Naive thymus-derived CD4-positive, alpha-beta T cell (primary cell): ENCODE measurements at regions of chr11 and their contacts with region 1.

Region 1: GRCh38 chr11:66842896-66843775 is at the start of gene RCE1:
- DNase-seq: peak; percentile 86 to 96 (median 91)
- ATAC-seq: peak; percentile 96
- H3K4me3 ChIP-seq: peak within 1 kb of the TSS; percentile 94
- H3K4me3 Mint-ChIP-seq: peak within 1 kb of the TSS; percentile 87 to 97 (median 93)
- H3K27ac ChIP-seq: peak within 1 kb of the TSS; percentile 96
- H3K27ac Mint-ChIP-seq: peak within 1 kb of the TSS; percentile 74 to 97 (median 92)
- H3K4me1 ChIP-seq: peaks cover 31 to 47% of the 10 kb centered on the region in 2 donors
- H3K4me1 Mint-ChIP-seq: peaks cover 31 to 58% (median 47%) of the 10 kb centered on the region in 7 donors
- H3K27me3 ChIP-seq: no peaks in the 10 kb centered on the region
- H3K27me3 Mint-ChIP-seq: no peaks in the 10 kb centered on the region
- total RNA-seq, gene RCE1: 24.6 to 47.1 (median 33.6) TPM

Region 2: DNA sequence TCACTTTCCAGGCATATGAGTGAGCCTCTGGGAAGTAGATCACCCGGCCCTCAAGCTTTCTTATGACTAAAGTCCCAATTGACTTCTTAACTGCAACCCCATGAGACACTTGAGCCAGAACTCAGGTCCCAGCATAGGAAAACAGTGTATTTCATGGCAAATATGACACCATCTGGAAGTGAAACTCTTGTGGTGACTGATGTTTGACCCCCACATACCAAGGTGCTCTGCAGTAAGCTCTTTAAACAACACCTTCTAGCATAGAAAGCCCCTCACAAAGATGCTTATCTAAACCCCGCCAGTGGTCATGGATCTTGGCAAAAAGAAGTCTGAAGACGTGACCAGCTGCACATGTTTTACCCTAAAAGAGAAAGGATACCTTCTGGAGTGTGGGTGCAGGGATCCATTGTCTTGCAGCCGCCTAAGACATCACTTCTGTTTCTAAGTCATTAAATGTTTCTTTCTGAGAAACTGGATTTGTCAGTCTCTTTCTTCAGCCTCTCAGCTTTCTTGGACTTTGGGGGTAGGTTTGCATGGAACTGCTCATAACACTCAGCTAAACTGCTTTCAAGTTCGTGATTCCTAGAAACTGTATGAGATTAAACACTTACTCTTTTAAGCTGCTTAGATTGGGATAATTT is 383.9 kb before region 1 on chr11:
- CTCF ChIA-PET with region 1: no interaction called
- POLR2A ChIA-PET with region 1: no interaction called
- intact Hi-C with region 1: no loop called
- DNase-seq: no peak
- ATAC-seq: no peak
- H3K4me3 ChIP-seq: no peak overlapping the region
- H3K4me3 Mint-ChIP-seq: no peak overlapping the region
- H3K27ac ChIP-seq: no peak overlapping the region
- H3K27ac Mint-ChIP-seq: no peak overlapping the region
- H3K4me1 ChIP-seq: peaks cover 0 to 5% of the 10 kb centered on the region in 2 donors
- H3K4me1 Mint-ChIP-seq: peaks cover 6 to 34% (median 12%) of the 10 kb centered on the region in 7 donors
- H3K27me3 ChIP-seq: no peaks in the 10 kb centered on the region
- H3K27me3 Mint-ChIP-seq: no peaks in the 10 kb centered on the region

Region 3: DNA sequence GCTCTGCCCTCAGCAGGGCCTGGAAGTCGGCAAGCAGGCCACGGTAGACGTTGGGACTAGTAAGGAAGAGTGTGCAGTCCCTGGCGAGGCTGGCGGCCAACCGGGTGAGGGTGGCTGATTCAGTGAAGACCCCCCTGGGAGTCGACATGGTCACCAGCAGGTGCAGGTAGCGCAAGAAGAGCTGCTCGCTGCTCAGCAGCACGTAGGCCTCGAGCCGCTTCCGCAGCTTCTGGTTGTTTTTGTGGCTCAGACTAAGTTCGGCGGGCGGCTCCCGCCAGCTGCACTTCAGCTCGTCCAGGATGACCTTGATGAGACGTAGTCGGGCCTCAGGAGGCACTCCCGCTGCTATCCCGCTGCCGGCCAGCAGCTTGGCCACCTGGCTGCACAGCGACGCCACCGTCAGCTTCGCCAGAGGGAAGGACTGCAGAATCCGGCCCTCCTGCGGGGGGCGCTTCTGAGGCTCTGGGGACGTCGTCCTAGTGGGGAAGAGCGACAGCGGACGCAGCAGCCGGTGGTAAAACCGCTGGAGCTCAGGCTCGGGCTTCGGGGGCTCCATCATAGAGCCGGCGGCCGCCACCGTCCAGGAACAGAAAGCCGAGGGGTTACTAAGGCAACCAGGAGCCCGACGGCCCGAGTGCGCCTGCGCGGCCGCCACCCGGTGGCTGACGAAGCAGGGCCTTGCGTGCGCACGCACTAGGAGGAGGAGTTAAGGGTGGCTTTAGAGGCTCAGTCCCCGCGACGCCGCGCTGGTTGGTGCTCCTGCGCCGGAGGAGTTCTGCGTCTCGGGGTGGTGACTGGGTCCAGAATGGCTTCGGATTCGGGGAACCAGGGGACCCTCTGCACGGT is 250.5 kb before region 1 on chr11 and contains the starts of genes CCDC87 and CCS:
- CTCF ChIA-PET with region 1: no interaction called
- POLR2A ChIA-PET with region 1: interaction called, 3 read pairs
- intact Hi-C with region 1: loop called in 1 of 2 experiments (anchors 2 kb)
- DNase-seq: peak; percentile 94 to 98 (median 96)
- ATAC-seq: peak; percentile 98
- H3K4me3 ChIP-seq: peak within 1 kb of the TSS; percentile 98
- H3K4me3 Mint-ChIP-seq: peak within 1 kb of the TSS; percentile 89 to 100 (median 98)
- H3K27ac ChIP-seq: peak within 1 kb of the TSS; percentile 94
- H3K27ac Mint-ChIP-seq: peak within 1 kb of the TSS; percentile 90 to 100 (median 97)
- H3K4me1 ChIP-seq: peaks cover 9 to 30% of the 10 kb centered on the region in 2 donors
- H3K4me1 Mint-ChIP-seq: peaks cover 13 to 40% (median 28%) of the 10 kb centered on the region in 7 donors
- H3K27me3 ChIP-seq: no peaks in the 10 kb centered on the region
- H3K27me3 Mint-ChIP-seq: no peaks in the 10 kb centered on the region
- total RNA-seq, gene CCDC87: 0.11 to 1.2 (median 0.60) TPM in 4 of 5 experiments, not detected in the other
- total RNA-seq, gene CCS: 32.8 to 63.5 (median 42.5) TPM

Region 4: DNA sequence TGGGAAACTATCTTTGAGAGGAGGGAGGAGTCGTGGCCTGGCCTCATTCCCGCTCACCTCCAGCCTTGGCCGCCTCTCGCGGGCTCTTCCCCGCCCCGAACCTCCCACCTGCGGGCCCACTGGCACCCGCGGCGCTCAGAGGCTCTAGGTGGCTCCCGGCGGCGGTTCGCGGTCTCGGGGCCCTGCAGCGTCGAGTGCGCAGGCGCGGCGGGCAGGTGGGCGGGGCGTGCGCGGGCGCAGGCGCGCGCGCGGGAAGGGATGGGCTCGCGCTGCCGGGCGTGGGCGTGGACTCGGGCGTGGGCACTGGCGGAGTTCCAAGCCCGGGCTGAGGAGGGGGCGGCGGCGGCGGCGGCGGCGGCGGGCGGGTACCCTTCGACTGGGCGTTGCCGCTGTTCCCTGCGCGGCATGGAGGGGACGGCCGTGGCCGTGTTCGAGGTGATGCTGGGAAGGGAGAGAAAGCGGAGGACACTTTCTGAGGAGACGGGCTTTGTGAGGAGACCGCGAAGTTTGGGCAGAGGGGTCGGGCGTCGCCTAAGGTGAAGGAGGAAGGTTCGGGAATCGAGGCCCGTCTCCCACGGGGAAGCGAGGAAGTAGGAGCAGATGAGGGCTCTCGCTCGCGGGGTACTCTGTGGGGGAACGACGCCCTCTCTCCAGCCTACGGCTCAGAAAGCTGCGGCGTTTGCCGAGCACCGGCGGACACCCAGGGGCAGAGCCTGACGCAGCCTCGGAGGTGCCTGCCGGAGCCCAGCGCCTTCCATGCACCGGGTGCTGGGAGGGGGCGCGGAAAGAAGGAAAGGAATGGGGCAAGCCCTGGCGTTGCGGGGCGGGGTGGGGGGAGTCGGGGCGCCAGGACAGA is 98.4 kb before region 1 on chr11:
- CTCF ChIA-PET with region 1: interaction called, 3 read pairs
- POLR2A ChIA-PET with region 1: interaction called, 4 read pairs
- intact Hi-C with region 1: loop called in 1 of 2 experiments (anchors 1 kb)
- DNase-seq: peak; percentile 83 to 98 (median 91)
- ATAC-seq: peak; percentile 97
- H3K4me3 ChIP-seq: peak overlapping the region; percentile 83
- H3K4me3 Mint-ChIP-seq: peak overlapping the region; percentile 82 to 97 (median 94)
- H3K27ac ChIP-seq: peak overlapping the region; percentile 89
- H3K27ac Mint-ChIP-seq: peak overlapping the region; percentile 18 to 89 (median 81)
- H3K4me1 ChIP-seq: peaks cover 0 to 3% of the 10 kb centered on the region in 2 donors
- H3K4me1 Mint-ChIP-seq: peaks cover 0 to 16% (median 4%) of the 10 kb centered on the region in 7 donors
- H3K27me3 ChIP-seq: no peaks in the 10 kb centered on the region
- H3K27me3 Mint-ChIP-seq: peaks cover 0 to 10% (median 0%) of the 10 kb centered on the region in 5 donors

Region 5: DNA sequence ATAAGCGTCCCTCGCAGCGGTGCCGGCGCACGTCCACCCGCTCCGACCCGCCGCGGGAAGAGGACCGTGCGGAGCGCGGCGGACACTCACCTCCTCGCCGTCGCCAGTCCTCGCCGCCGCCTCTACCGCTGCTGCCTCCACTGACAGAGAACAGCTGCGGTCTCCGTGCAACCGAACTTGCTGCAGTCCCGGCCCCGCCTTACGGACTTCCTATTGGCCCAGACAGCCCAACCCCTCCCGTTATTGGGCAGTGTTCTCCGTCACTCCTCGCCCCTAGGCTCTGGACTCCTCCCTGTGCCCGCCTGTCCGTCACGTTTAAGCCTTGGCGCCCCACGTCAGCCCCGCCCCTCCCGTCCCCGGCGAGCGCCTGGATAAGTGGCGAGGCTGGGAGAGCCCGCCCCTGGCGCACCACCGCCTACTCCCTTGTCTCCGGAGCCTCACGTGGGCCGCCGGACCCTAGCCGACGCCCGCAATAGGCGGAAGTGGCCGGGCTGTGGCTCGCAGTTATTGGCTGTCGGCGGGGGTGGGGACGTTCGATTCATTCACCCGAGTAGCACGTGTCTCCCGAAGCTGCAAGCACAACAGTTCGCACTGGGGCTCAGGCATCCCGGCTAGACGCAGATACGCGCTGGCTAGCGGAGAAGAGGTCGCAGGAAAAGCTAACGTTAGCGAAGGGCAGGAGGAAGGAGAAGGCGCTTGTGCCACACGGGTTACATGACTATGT is 115.3 kb after region 1 on chr11 and contains the start of gene PC:
- CTCF ChIA-PET with region 1: no interaction called
- POLR2A ChIA-PET with region 1: no interaction called
- intact Hi-C with region 1: loop called (anchors 1 kb)
- DNase-seq: peak; percentile 83 to 98 (median 96)
- ATAC-seq: peak; percentile 98
- H3K4me3 ChIP-seq: peak within 1 kb of the TSS; percentile 81
- H3K4me3 Mint-ChIP-seq: peak within 1 kb of the TSS; percentile 82 to 95 (median 91)
- H3K27ac ChIP-seq: peak within 1 kb of the TSS; percentile 64
- H3K27ac Mint-ChIP-seq: peak within 1 kb of the TSS; percentile 76 to 93 (median 87)
- H3K4me1 ChIP-seq: peaks cover 8 to 19% of the 10 kb centered on the region in 2 donors
- H3K4me1 Mint-ChIP-seq: peaks cover 16 to 31% (median 27%) of the 10 kb centered on the region in 7 donors
- H3K27me3 ChIP-seq: no peaks in the 10 kb centered on the region
- H3K27me3 Mint-ChIP-seq: peaks cover 0 to 6% (median 0%) of the 10 kb centered on the region in 5 donors
- total RNA-seq, gene PC: 8.4 to 11.2 (median 10.0) TPM

Region 6: DNA sequence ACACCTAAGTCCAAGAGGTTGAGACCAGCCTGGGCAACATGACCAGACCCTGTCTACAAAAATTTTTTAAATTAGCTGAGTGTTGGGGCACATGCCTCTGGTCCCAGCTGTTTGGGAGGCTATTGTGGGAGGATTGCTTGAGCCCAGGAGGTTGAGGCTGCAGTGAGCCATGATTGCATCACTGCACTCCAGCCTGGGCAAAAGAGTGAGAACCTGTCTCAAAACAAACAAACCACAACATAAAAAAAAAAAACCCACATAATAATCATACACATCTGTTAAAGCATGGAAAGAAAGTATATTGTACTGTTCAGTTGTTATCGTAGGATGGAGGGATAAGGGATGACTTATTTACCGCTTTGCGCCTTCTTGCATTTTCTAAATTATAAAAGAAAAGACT is 387.3 kb after region 1 on chr11:
- CTCF ChIA-PET with region 1: no interaction called
- POLR2A ChIA-PET with region 1: no interaction called
- intact Hi-C with region 1: loop called in 1 of 2 experiments (anchors 5 kb)
- DNase-seq: no peak
- ATAC-seq: no peak
- H3K4me3 ChIP-seq: no peak overlapping the region
- H3K4me3 Mint-ChIP-seq: no peak overlapping the region
- H3K27ac ChIP-seq: no peak overlapping the region
- H3K27ac Mint-ChIP-seq: peak overlapping the region in 5 of 9 donors; percentile 38 to 62 (median 41)
- H3K4me1 ChIP-seq: no peaks in the 10 kb centered on the region
- H3K4me1 Mint-ChIP-seq: peaks cover 11 to 33% (median 24%) of the 10 kb centered on the region in 7 donors
- H3K27me3 ChIP-seq: no peaks in the 10 kb centered on the region
- H3K27me3 Mint-ChIP-seq: no peaks in the 10 kb centered on the region